SK-N-SH (cell line): ENCODE measurements at regions of chr12 and their contacts with region 1.

Region 1: GRCh38 chr12:52023182-52023975 is 16.6 kb downstream of the TAMALIN start:
- DNase-seq: peak; percentile 96
- H3K4me3 ChIP-seq: peak overlapping the region; percentile 49 to 66
- H3K27ac ChIP-seq: peak overlapping the region in 1 of 2 experiments; percentile 12; a peak in 1 of 4 replicates
- H3K4me1 ChIP-seq: peaks cover 5 to 23% of the 10 kb centered on the region in 2 experiments; a peak in 1 of 4 replicates
- H3K27me3 ChIP-seq: no peaks in the 10 kb centered on the region
- CTCF ChIP-seq: peak; percentile 90
- EP300 ChIP-seq: no peak; a peak in 1 of 4 replicates
- RAD21 ChIP-seq: peak; percentile 80

Region 2: DNA sequence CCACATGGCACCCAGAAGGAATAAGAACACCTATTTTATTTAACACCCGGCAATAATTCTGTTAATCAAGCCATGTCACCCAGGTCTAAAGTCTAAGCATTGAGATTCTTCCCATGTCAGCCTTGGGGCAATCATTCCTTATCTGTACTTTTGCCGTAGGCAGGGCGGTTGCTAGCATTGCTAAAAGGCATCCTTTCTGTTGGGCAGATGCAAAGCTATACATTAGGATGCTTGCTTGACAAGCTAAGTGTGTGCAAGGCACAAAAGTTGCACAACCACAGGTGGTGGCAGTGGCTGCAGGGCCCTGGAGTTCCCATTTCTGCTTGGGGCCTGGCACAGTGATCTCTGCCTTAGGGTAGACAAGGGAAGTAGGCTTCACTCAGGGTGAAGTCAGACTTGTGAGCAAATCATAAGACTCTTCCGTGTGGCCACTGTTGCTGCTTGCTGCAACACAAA is 619.7 kb before region 1 on chr12:
- CTCF ChIA-PET with region 1: no interaction called
- POLR2A ChIA-PET with region 1: no interaction called
- DNase-seq: no peak
- H3K4me3 ChIP-seq: no peak overlapping the region
- H3K27ac ChIP-seq: peak overlapping the region in 1 of 2 experiments; percentile 18; a peak in 1 of 4 replicates
- H3K4me1 ChIP-seq: peaks cover 0 to 48% of the 10 kb centered on the region in 2 experiments; a peak in 2 of 4 replicates
- H3K27me3 ChIP-seq: no peaks in the 10 kb centered on the region
- CTCF ChIP-seq: no peak
- EP300 ChIP-seq: no peak
- RAD21 ChIP-seq: no peak

Region 3: DNA sequence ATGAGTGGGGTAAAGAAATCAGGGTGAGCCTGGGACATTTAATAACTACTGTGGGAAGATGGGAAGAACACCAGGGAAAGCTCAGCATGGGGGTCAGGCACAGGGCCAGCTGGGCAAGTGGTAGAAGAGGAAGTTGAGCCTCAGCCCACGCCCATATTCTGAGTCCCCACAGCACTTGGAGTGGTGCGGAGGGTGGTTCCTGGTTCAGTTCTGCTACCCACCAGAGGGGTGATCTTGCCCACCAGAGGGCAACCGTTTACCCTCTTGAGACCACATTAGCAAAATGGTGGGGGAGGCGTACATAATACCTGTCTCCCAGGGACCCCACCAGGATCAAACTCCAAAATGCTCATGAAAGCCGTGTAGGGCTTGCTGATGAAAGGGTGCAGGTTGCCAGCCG is 152.3 kb before region 1 on chr12:
- CTCF ChIA-PET with region 1: interaction called, 12 read pairs
- POLR2A ChIA-PET with region 1: no interaction called
- DNase-seq: no peak
- H3K4me3 ChIP-seq: no peak overlapping the region
- H3K27ac ChIP-seq: no peak overlapping the region
- H3K4me1 ChIP-seq: peaks cover 0 to 47% of the 10 kb centered on the region in 2 experiments; a peak in 1 of 4 replicates
- H3K27me3 ChIP-seq: no peaks in the 10 kb centered on the region; the same call in 1 of the 2 replicates
- CTCF ChIP-seq: no peak
- EP300 ChIP-seq: no peak
- RAD21 ChIP-seq: no peak

Region 4: GRCh38 chr12:51905471-51906429 is 117.6 kb before region 1 on chr12:
- CTCF ChIA-PET with region 1: interaction called, 13 read pairs
- POLR2A ChIA-PET with region 1: no interaction called
- DNase-seq: peak; percentile 61
- H3K4me3 ChIP-seq: no peak overlapping the region
- H3K27ac ChIP-seq: peak overlapping the region in 1 of 2 experiments; percentile 40; a peak in 2 of 4 replicates
- H3K4me1 ChIP-seq: peaks cover 0 to 28% of the 10 kb centered on the region in 2 experiments; a peak in 1 of 4 replicates
- H3K27me3 ChIP-seq: no peaks in the 10 kb centered on the region
- CTCF ChIP-seq: no peak
- EP300 ChIP-seq: no peak
- RAD21 ChIP-seq: no peak

Region 5: GRCh38 chr12:51980051-51980808 is 43.1 kb before region 1 on chr12:
- CTCF ChIA-PET with region 1: interaction called, 608 read pairs
- POLR2A ChIA-PET with region 1: no interaction called
- DNase-seq: peak; percentile 85
- H3K4me3 ChIP-seq: peak overlapping the region in 1 of 2 experiments; percentile 26; a peak in 1 of 4 replicates
- H3K27ac ChIP-seq: peak overlapping the region in 1 of 2 experiments; percentile 8; a peak in 1 of 4 replicates
- H3K4me1 ChIP-seq: peaks cover 0 to under 1% of the 10 kb centered on the region in 2 experiments; a peak in 1 of 4 replicates
- H3K27me3 ChIP-seq: no peaks in the 10 kb centered on the region
- CTCF ChIP-seq: peak; percentile 97
- EP300 ChIP-seq: no peak
- RAD21 ChIP-seq: peak; percentile 97

Region 6: GRCh38 chr12:52044261-52044983 is 21.0 kb after region 1 on chr12:
- CTCF ChIA-PET with region 1: interaction called, 199 read pairs
- POLR2A ChIA-PET with region 1: interaction called, 4 read pairs
- DNase-seq: no peak
- H3K4me3 ChIP-seq: no peak overlapping the region
- H3K27ac ChIP-seq: no peak overlapping the region
- H3K4me1 ChIP-seq: peaks cover 0 to 14% of the 10 kb centered on the region in 2 experiments; a peak in 1 of 4 replicates
- H3K27me3 ChIP-seq: no peaks in the 10 kb centered on the region
- CTCF ChIP-seq: no peak
- EP300 ChIP-seq: no peak
- RAD21 ChIP-seq: no peak

Region 7: DNA sequence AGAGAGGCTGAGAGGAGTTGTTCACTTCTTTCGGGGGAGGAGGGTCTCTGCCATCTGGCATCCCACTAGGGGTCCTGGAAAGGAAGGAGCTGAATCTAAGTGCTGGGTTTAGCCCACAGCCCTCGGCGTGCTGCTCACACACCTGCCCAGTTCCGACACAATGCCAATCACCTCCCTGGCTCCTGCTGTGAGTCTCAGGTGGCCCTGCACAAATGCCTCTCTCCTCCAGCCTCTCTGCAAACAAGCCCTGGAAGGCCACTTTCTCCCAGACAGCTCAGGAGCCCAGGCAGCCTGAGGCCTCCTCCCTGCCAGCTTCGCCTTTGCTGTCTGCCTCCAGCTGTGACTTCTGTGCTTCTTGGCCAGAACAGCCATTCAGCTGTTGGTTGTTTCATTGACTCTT is 107.3 kb after region 1 on chr12:
- CTCF ChIA-PET with region 1: interaction called, 247 read pairs
- POLR2A ChIA-PET with region 1: no interaction called
- DNase-seq: peak; percentile 5
- H3K4me3 ChIP-seq: no peak overlapping the region
- H3K27ac ChIP-seq: no peak overlapping the region
- H3K4me1 ChIP-seq: peaks cover 0 to 12% of the 10 kb centered on the region in 2 experiments; a peak in 1 of 4 replicates
- H3K27me3 ChIP-seq: no peaks in the 10 kb centered on the region; the same call in 1 of the 2 replicates
- CTCF ChIP-seq: no peak
- EP300 ChIP-seq: no peak
- RAD21 ChIP-seq: no peak